Aorta (tissue), 5 donors: ENCODE measurements at regions of chr1 and their contacts with region 1.

Region 1: DNA sequence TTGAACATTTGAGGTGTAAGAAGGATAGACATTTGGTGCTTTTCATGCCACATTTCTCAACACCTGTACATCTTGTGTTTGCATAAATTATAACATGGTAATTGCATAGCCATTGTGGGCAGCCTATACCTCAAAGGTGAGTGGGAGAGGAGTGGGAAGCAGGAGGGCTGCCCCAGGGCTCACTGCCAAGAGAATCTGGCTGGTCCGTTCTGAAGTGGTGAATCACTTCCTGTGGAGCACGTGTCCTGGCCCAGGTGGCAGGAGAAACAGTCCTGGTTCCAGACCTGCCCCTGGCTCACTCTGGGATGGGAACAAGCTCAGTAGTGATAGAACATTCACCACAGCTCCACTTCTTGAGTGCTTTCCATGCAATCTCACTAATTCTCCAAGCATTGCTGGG is 11.6 kb upstream of the OLFML2B start:
- DNase-seq: no peak
- ATAC-seq: no peak
- H3K4me3 ChIP-seq: no peak overlapping the region
- H3K27ac ChIP-seq: no peak overlapping the region
- H3K4me1 ChIP-seq: peaks cover 2 to 4% of the 10 kb centered on the region in 2 donors
- H3K27me3 ChIP-seq: no peaks in the 10 kb centered on the region

Region 2: GRCh38 chr1:161792740-161793139 is 242.5 kb before region 1 on chr1:
- intact Hi-C with region 1: loop called (anchors 2 kb)
- DNase-seq: no peak
- ATAC-seq: no peak
- H3K4me3 ChIP-seq: no peak overlapping the region
- H3K27ac ChIP-seq: no peak overlapping the region
- H3K4me1 ChIP-seq: no peaks in the 10 kb centered on the region
- H3K27me3 ChIP-seq: no peaks in the 10 kb centered on the region

Region 3: GRCh38 chr1:161864577-161864976 is 170.7 kb before region 1 on chr1:
- intact Hi-C with region 1: loop called (anchors 5 kb)
- DNase-seq: peak in 1 of 2 donors; percentile 52
- ATAC-seq: peak; percentile 74
- H3K4me3 ChIP-seq: no peak overlapping the region
- H3K27ac ChIP-seq: no peak overlapping the region
- H3K4me1 ChIP-seq: no peaks in the 10 kb centered on the region
- H3K27me3 ChIP-seq: no peaks in the 10 kb centered on the region

Region 4: GRCh38 chr1:161962091-161962887 is 73.0 kb before region 1 on chr1:
- intact Hi-C with region 1: loop called in 1 of 2 experiments (anchors 5 kb)
- DNase-seq: no peak
- ATAC-seq: peak; percentile 71
- H3K4me3 ChIP-seq: peak overlapping the region; percentile 8 to 29
- H3K27ac ChIP-seq: peak overlapping the region; percentile 54 to 93
- H3K4me1 ChIP-seq: peaks cover 0 to 16% of the 10 kb centered on the region in 2 donors
- H3K27me3 ChIP-seq: no peaks in the 10 kb centered on the region